K562 (cell line): ENCODE measurements at regions of chr5 and their contacts with region 1.

Region 1: GRCh38 chr5:81838307-81838906 is 87.5 kb upstream of the SSBP2 start:
- DNase-seq: peak; percentile 36 to 78 (median 52)
- ATAC-seq: peak; percentile 97
- H3K4me3 ChIP-seq: no peak overlapping the region
- H3K27ac ChIP-seq: 0 out of 3 replicates have a peak overlapping the region, but pooled peaks have one; percentile 8
- H3K4me1 ChIP-seq: peaks cover 0 to 9% of the 10 kb centered on the region in 2 experiments; a peak in 3 of 5 replicates
- H3K27me3 ChIP-seq: no peaks in the 10 kb centered on the region
- CTCF ChIP-seq: peak; percentile 70 to 83 (median 79)
- EP300 ChIP-seq: no peak
- POLR2A ChIP-seq: no peak
- RAD21 ChIP-seq: peak; percentile 80 to 89

Region 2: DNA sequence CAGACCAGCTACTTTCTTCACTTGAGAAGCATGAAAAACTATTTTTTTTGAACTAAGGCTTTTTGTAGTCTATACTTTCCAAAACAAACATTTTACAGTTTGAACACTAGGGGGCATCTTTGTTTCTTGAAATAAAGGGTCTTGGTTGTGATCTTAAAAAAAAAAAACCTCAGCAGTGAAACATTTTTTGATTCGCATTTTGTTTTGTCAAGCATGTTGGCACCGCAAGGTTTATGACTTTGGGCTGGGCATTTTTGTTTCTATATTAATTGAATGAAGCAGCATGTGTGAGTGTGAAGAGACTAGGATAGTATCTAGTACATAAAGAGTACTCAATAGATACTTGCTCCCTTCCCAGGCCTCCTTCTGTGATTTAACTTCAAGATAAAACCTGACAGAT is 412.8 kb before region 1 on chr5:
- CTCF ChIA-PET with region 1: no interaction called
- POLR2A ChIA-PET with region 1: no interaction called
- in situ Hi-C with region 1: loop called (anchors 10 kb)
- intact Hi-C with region 1: loop called (anchors 5 kb)
- DNase-seq: peak; percentile 16 to 28 (median 19)
- ATAC-seq: peak; percentile 78
- H3K4me3 ChIP-seq: no peak overlapping the region
- H3K27ac ChIP-seq: no peak overlapping the region
- H3K4me1 ChIP-seq: peaks cover 0 to 3% of the 10 kb centered on the region in 2 experiments; a peak in 3 of 5 replicates
- H3K27me3 ChIP-seq: no peaks in the 10 kb centered on the region
- CTCF ChIP-seq: peak; percentile 46 to 66 (median 47); a peak in 4 of 6 replicates
- EP300 ChIP-seq: no peak
- POLR2A ChIP-seq: no peak
- RAD21 ChIP-seq: peak; percentile 66 to 70

Region 3: DNA sequence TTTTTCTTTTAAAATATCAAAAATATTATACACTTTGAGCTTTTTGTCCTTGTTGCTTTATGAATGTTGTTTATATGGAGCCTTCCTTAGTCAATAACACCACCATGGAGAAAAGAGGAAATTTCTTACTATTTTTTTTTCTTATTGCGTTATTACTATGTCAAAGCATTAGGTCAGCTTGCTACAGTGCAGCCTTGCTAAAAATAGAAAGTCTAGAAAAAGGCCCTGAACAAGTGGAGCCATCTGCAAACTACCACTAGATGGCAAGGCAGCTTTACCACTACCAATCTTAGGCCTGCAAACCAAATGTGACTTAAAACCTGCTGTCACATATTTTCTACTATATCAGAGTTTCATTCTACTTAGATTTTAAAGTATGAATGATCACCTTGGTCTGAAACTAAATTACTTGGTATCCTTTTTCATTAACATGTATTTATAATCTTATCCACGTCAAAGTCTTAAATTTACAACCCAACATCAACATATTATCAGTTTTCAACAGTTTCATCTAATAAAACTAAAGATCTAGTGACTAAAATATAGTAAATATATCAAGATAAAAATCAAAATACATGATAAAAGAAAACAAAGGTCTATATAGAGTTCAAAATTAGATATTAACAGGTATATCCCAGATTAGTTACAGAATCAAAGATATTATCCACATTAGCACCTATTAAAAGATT is 331.4 kb before region 1 on chr5:
- CTCF ChIA-PET with region 1: no interaction called
- POLR2A ChIA-PET with region 1: no interaction called
- in situ Hi-C with region 1: no loop called
- intact Hi-C with region 1: loop called (anchors 1 kb)
- DNase-seq: peak; percentile 30 to 83 (median 61)
- ATAC-seq: peak; percentile 100
- H3K4me3 ChIP-seq: no peak overlapping the region
- H3K27ac ChIP-seq: no peak overlapping the region; the same call in 2 of the 3 replicates
- H3K4me1 ChIP-seq: peaks cover 0 to 9% of the 10 kb centered on the region in 2 experiments; a peak in 2 of 5 replicates
- H3K27me3 ChIP-seq: no peaks in the 10 kb centered on the region
- CTCF ChIP-seq: peak; percentile 72 to 93 (median 80)
- EP300 ChIP-seq: no peak; the same call in 1 of the 2 replicates
- POLR2A ChIP-seq: no peak
- RAD21 ChIP-seq: peak; percentile 93 to 94

Region 4: GRCh38 chr5:81787474-81788242 is 50.7 kb before region 1 on chr5:
- CTCF ChIA-PET with region 1: no interaction called
- POLR2A ChIA-PET with region 1: interaction called, 3 read pairs
- in situ Hi-C with region 1: no loop called
- intact Hi-C with region 1: loop called (anchors 5 kb)
- DNase-seq: peak in 1 of 4 experiments; percentile 27
- ATAC-seq: peak; percentile 68
- H3K4me3 ChIP-seq: no peak overlapping the region
- H3K27ac ChIP-seq: no peak overlapping the region
- H3K4me1 ChIP-seq: peaks cover 0 to 21% of the 10 kb centered on the region in 2 experiments; a peak in 4 of 5 replicates
- H3K27me3 ChIP-seq: no peaks in the 10 kb centered on the region
- CTCF ChIP-seq: no peak
- EP300 ChIP-seq: peak; percentile 18; the same call in 1 of the 2 replicates
- POLR2A ChIP-seq: no peak
- RAD21 ChIP-seq: no peak

Region 5: GRCh38 chr5:82218374-82219156 is 380.2 kb after region 1 on chr5:
- CTCF ChIA-PET with region 1: no interaction called
- POLR2A ChIA-PET with region 1: no interaction called
- in situ Hi-C with region 1: no loop called
- intact Hi-C with region 1: no loop called
- DNase-seq: no peak
- ATAC-seq: no peak
- H3K4me3 ChIP-seq: no peak overlapping the region
- H3K27ac ChIP-seq: no peak overlapping the region
- H3K4me1 ChIP-seq: no peaks in the 10 kb centered on the region
- H3K27me3 ChIP-seq: no peaks in the 10 kb centered on the region
- CTCF ChIP-seq: no peak
- EP300 ChIP-seq: no peak
- POLR2A ChIP-seq: no peak
- RAD21 ChIP-seq: no peak